H1 (cell line): ENCODE measurements at regions of chr1 and their contacts with region 1.

Region 1: GRCh38 chr1:238252033-238252802 is 361.5 kb upstream of the ZP4 start:
- DNase-seq: peak; percentile 60 to 86
- H3K4me3 ChIP-seq: no peak overlapping the region
- H3K27ac ChIP-seq: no peak overlapping the region
- H3K4me1 ChIP-seq: peaks cover 0 to 6% (median 5%) of the 10 kb centered on the region in 4 experiments; a peak in 4 of 7 replicates
- H3K27me3 ChIP-seq: no peaks in the 10 kb centered on the region
- CTCF ChIP-seq: peak; percentile 47 to 71 (median 71)
- EP300 ChIP-seq: peak in 1 of 2 experiments; percentile 58; a peak in 1 of 3 replicates
- POLR2A ChIP-seq: no peak
- RAD21 ChIP-seq: peak; percentile 74 to 84

Region 2: DNA sequence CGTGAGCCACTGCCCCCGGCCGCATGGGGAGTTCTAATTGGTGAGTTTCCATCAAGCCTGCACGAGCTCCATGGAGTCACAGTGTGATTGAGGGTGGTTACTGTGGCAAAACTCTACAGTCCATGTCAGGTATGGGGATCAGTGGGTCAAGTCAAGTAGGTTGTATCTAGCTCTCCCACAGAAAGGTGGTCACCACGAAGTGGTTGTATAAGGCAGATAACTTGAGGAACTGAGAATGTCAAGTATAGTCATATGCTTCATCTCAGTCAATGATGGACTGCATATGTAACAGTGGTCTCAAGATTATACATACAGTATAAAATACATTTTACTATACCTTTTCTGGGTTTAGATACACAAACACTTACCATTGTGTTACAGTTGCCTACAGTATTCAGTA is 12.9 kb before region 1 on chr1:
- CTCF ChIA-PET with region 1: interaction called, 22 read pairs
- POLR2A ChIA-PET with region 1: no interaction called
- DNase-seq: no peak
- H3K4me3 ChIP-seq: no peak overlapping the region
- H3K27ac ChIP-seq: no peak overlapping the region
- H3K4me1 ChIP-seq: peaks cover 0 to 2% (median 0%) of the 10 kb centered on the region in 4 experiments; a peak in 1 of 7 replicates
- H3K27me3 ChIP-seq: no peaks in the 10 kb centered on the region
- CTCF ChIP-seq: no peak
- EP300 ChIP-seq: no peak
- POLR2A ChIP-seq: no peak
- RAD21 ChIP-seq: no peak